Psoas muscle (tissue), 8 donors: ENCODE measurements at regions of chr15 and their contacts with region 1.

Region 1: DNA sequence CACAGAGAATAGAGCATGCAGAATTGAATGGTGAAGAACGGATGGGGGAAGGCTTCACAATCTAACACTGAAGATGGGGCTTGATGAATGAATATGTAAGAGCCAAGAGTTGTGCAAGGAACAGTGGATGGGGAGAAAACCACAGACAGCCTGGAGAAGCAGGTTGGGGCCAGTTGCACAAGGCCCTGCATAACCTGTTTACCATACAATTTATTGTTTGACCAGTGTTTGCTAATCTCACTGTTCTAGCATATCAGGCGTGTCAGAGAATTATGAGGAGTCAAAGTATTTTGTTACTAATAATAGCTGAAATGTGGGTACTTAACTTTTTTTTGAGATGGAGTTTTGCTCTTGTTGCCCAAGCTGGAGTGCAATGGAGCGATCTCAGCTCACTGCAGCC is 36.4 kb downstream of the LINS1 start:
- DNase-seq: no peak
- ATAC-seq: no peak
- H3K4me3 ChIP-seq: no peak overlapping the region
- H3K27ac ChIP-seq: no peak overlapping the region
- H3K4me1 ChIP-seq: no peaks in the 10 kb centered on the region
- H3K27me3 ChIP-seq: no peaks in the 10 kb centered on the region
- CTCF ChIP-seq: no peak

Region 2: GRCh38 chr15:100438570-100438969 is 127.0 kb before region 1 on chr15:
- intact Hi-C with region 1: loop called (anchors 10 kb)
- DNase-seq: peak; percentile 62 to 83
- ATAC-seq: peak in 2 of 4 donors; percentile 27 to 54
- H3K4me3 ChIP-seq: no peak overlapping the region
- H3K27ac ChIP-seq: no peak overlapping the region
- H3K4me1 ChIP-seq: peaks cover 10% of the 10 kb centered on the region
- H3K27me3 ChIP-seq: no peaks in the 10 kb centered on the region
- CTCF ChIP-seq: no peak